ENCODE measurements at regions of chr18 and their contacts with region 1.

Region 1: DNA sequence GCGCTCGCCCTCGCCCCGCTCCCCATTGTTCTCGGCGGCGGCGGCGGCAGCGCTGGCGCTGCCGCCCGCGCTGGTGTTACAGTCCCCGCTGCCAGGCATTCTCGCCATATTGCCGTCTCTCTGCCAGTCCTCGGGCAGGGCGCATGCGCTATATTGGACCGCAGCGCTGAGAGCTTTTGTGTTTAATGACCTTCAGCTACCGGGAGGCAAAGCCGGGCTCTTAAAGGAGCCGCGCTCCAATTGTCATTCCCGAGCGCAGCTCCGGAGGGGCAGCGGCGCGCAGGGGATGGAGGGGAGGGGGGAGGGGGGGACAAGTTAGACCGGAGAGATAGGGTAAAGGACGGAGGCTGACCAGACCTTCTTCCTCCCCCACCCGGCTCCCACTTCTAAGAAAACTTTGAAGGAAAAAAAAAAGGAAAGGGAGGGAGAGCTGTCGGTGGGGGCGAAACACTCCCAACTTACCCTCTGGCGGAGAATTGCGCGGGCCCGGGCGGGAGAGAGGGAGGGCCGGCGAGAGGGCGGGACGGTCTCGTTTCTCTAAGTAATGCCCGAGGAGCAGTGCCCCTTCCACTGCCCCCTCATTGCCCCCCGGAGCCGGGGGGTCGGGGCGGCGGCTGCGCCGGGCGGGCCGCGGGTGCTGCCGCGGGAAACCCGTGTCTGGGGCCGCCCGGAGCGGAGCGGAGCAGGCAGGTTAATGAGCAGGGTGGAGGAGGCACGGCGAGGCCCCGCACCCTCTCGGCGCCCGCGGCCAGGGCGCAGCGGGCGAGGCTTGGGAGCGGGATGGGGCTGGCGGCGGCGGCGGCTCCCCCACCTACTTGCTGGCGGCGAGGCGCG is at the start of gene KCTD1:
- DNase-seq: peak; percentile 92
- H3K4me3 Mint-ChIP-seq: peak within 1 kb of the TSS; percentile 91
- H3K27ac Mint-ChIP-seq: peak within 1 kb of the TSS; percentile 83
- H3K4me1 Mint-ChIP-seq: peaks cover 10% of the 10 kb centered on the region
- H3K27me3 Mint-ChIP-seq: peaks cover 38% of the 10 kb centered on the region
- total RNA-seq, gene KCTD1: 4.7 and 5.0 TPM in 2 replicates

Region 2: GRCh38 chr18:25351777-25352628 is 1196.6 kb before region 1 on chr18 and contains the start of gene ZNF521:
- intact Hi-C with region 1: loop called (anchors 10 kb)
- DNase-seq: peak; percentile 79
- H3K4me3 Mint-ChIP-seq: peak within 1 kb of the TSS; percentile 77
- H3K27ac Mint-ChIP-seq: no peak within 1 kb of the TSS
- H3K4me1 Mint-ChIP-seq: peaks cover 9% of the 10 kb centered on the region
- H3K27me3 Mint-ChIP-seq: peaks cover 65% of the 10 kb centered on the region
- total RNA-seq, gene ZNF521: not detected in 2 replicates

Region 3: GRCh38 chr18:26226229-26227005 is 322.2 kb before region 1 on chr18 and contains the start of gene TAF4B:
- intact Hi-C with region 1: loop called (anchors 5 kb)
- DNase-seq: peak; percentile 99
- H3K4me3 Mint-ChIP-seq: peak within 1 kb of the TSS; percentile 96
- H3K27ac Mint-ChIP-seq: peak within 1 kb of the TSS; percentile 99
- H3K4me1 Mint-ChIP-seq: peaks cover 32% of the 10 kb centered on the region
- H3K27me3 Mint-ChIP-seq: peaks cover 8% of the 10 kb centered on the region
- total RNA-seq, gene TAF4B: 17.5 and 17.8 TPM in 2 replicates

Region 4: DNA sequence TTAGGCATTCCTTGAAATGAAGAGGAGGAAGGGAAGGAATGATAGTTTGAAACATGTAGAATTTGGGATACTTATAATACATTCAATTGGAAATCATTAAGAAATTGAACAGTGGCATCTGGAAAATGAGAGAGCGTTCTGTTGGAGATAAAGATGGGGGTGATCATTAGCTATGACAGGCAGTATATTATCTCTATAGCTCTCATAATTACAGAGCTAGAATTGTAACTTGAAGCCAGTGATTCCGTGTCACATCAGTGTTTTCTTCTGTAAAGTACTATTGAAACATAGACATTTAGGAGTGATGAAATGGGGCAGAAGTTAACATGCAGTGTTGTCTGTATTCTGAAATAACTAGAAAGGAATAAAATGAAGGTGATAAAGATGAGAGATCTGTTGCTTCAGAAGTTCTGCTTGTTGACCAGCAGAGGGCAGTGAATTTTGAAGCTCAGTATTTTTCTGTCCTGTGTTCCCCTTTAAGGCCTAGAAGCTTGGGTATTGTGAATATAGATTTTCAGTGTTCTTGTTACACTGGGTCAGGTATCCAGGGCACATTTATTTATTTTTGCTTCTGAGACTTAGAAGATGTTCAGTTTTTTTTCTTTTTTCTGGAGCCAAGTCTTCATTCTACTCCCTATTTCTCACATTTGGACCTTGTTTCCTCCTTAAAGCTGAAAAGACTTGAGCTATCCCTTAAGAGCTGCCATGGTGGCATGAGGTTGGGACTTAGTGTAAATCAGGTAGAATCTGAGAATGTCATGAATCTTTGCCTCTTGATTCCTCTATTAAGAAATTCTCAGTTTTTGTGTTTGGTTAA is 165.0 kb before region 1 on chr18:
- intact Hi-C with region 1: loop called (anchors 5 kb)
- DNase-seq: peak; percentile 65
- H3K4me3 Mint-ChIP-seq: no peak overlapping the region
- H3K27ac Mint-ChIP-seq: no peak overlapping the region
- H3K4me1 Mint-ChIP-seq: no peaks in the 10 kb centered on the region
- H3K27me3 Mint-ChIP-seq: no peaks in the 10 kb centered on the region

Region 5: DNA sequence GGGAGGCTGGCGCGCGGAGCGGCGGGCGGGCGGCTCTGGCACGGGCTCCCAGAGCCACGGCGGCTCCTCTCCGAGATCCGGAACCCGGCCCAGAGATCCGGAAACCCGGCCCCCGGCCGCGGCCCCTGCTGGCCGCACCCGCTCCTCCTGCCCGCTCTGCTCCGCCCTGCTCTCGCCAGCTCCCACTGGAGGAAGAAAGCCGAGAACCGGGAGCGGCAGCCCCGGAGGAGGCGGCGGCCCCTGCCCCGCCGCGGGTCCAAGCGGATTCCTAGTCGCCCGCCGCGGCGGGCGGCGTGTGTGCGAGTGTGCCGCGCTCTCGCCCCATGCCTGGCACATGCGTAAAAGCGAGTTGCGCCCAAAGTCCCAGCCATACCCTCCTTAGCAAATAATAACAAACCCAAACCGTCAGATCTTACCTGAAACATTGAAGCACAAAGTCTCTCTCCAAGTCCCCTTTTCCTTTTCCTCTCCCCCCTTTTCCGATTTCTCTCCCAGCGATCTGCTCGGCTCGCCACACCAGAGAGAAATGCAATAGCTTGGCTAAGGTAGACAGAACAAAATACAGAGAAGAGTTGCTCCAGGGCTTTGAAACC is 108.4 kb after region 1 on chr18:
- intact Hi-C with region 1: loop called (anchors 5 kb)
- DNase-seq: peak; percentile 71
- H3K4me3 Mint-ChIP-seq: peak overlapping the region; percentile 88
- H3K27ac Mint-ChIP-seq: no peak overlapping the region
- H3K4me1 Mint-ChIP-seq: peaks cover 13% of the 10 kb centered on the region
- H3K27me3 Mint-ChIP-seq: peaks cover 73% of the 10 kb centered on the region

Measured in activated CD4-positive, alpha-beta T cell treated with anti-CD3 and anti-CD28 coated beads, Interleukin-2, amount 10 ng/mL, durations not matched to agents 24 days and 14 days (primary cell).